Breast epithelium (tissue), 4 donors: ENCODE measurements at regions of chr3 and their contacts with region 1.

Region 1: GRCh38 chr3:49171119-49171774 is at the start of gene KLHDC8B:
- DNase-seq: peak; percentile 69 to 83
- H3K4me3 ChIP-seq: peak within 1 kb of the TSS; percentile 65 to 81 (median 75)
- H3K27ac ChIP-seq: peak within 1 kb of the TSS; percentile 82 to 85
- H3K4me1 ChIP-seq: peaks cover 8 to 11% of the 10 kb centered on the region in 2 donors
- H3K27me3 ChIP-seq: no peaks in the 10 kb centered on the region
- CTCF ChIP-seq: peak; percentile 84 to 90 (median 89)
- POLR2A ChIP-seq: no peak
- total RNA-seq, gene KLHDC8B: 38.7 to 106 (median 46.2) TPM

Region 2: GRCh38 chr3:49454458-49454857 is 283.2 kb after region 1 on chr3:
- intact Hi-C with region 1: loop called (anchors 10 kb)
- DNase-seq: no peak
- H3K4me3 ChIP-seq: no peak overlapping the region
- H3K27ac ChIP-seq: no peak overlapping the region
- H3K4me1 ChIP-seq: no peaks in the 10 kb centered on the region
- H3K27me3 ChIP-seq: no peaks in the 10 kb centered on the region
- CTCF ChIP-seq: no peak
- POLR2A ChIP-seq: no peak